ENCODE measurements at regions of chr16 and their contacts with region 1.

Region 1: GRCh38 chr16:86343027-86343787 is 167.1 kb upstream of the FOXF1 start:
- DNase-seq: peak; percentile 83
- H3K4me3 ChIP-seq: no peak overlapping the region
- H3K27ac ChIP-seq: peak overlapping the region; percentile 88
- H3K4me1 ChIP-seq: peaks cover 43% of the 10 kb centered on the region
- H3K27me3 ChIP-seq: no peaks in the 10 kb centered on the region
- CTCF ChIP-seq: no peak
- POLR2A ChIP-seq: no peak

Region 2: GRCh38 chr16:86072328-86073102 is 270.7 kb before region 1 on chr16:
- CTCF ChIA-PET with region 1: interaction called, 3 read pairs
- POLR2A ChIA-PET with region 1: no interaction called
- dilution Hi-C with region 1: no loop called
- intact Hi-C with region 1: loop called (anchors 5 kb)
- DNase-seq: peak; percentile 75
- H3K4me3 ChIP-seq: no peak overlapping the region
- H3K27ac ChIP-seq: no peak overlapping the region
- H3K4me1 ChIP-seq: peaks cover 9% of the 10 kb centered on the region
- H3K27me3 ChIP-seq: peaks cover 0 to 2% of the 10 kb centered on the region in 2 experiments
- CTCF ChIP-seq: peak; percentile 75 to 85
- POLR2A ChIP-seq: no peak

Region 3: DNA sequence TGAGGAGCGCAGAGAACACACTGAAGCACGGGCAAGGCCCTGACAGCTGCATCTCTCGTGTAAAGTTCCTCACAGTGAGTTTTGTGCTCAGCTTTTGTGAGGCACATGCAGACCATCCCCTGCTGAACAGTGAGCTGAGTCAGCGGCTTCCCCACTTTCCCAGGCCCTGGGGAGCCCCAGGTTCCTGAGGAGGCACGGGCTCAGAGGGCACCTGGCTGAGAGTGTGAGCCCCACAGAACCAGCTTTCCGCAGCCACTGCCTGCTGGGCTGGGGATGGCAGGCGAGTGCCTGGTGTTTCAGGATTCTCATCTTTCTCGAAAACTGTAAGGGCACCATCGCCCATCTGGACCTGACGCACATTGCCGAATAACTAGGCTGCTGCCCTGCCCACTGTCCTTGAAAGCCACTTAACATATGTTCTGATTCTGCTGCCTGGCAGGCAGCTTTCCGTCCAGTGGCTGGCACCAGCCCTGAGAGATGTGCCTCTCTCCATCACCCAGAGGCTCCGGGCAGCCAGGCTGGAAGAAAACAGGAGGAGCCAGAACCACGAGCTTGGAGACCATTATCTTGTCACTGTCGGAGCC is 99.5 kb before region 1 on chr16:
- CTCF ChIA-PET with region 1: no interaction called
- POLR2A ChIA-PET with region 1: no interaction called
- dilution Hi-C with region 1: no loop called
- intact Hi-C with region 1: no loop called
- DNase-seq: no peak
- H3K4me3 ChIP-seq: no peak overlapping the region
- H3K27ac ChIP-seq: no peak overlapping the region
- H3K4me1 ChIP-seq: no peaks in the 10 kb centered on the region
- H3K27me3 ChIP-seq: peaks cover 17 to 21% of the 10 kb centered on the region in 2 experiments
- CTCF ChIP-seq: no peak
- POLR2A ChIP-seq: no peak

Region 4: DNA sequence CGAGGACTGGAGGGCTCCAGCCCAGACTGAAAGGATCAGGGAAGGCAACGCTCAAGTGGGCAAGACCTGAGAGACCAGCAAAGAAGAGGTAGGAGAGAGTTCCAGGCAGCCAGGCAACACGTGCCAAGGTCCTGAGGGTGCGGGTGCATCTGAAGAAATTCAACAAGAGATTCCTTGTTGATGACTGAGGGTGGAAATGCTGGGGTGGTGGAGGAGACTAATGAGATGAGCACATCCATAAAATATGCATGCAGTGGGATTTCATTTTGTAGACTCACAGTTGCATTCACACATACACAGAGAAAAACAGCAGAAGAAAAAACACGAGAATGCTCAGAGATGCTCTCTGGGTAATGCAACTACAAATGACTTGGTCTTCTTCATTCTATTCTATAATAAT is 12.3 kb after region 1 on chr16:
- CTCF ChIA-PET with region 1: interaction called, 4 read pairs
- POLR2A ChIA-PET with region 1: no interaction called
- dilution Hi-C with region 1: no loop called
- intact Hi-C with region 1: loop called (anchors 1 kb)
- DNase-seq: no peak
- H3K4me3 ChIP-seq: no peak overlapping the region
- H3K27ac ChIP-seq: no peak overlapping the region
- H3K4me1 ChIP-seq: peaks cover 5% of the 10 kb centered on the region
- H3K27me3 ChIP-seq: peaks cover 20 to 27% of the 10 kb centered on the region in 2 experiments
- CTCF ChIP-seq: no peak
- POLR2A ChIP-seq: no peak

Region 5: GRCh38 chr16:86387461-86388440 is 44.5 kb after region 1 on chr16:
- CTCF ChIA-PET with region 1: interaction called, 8 read pairs
- POLR2A ChIA-PET with region 1: no interaction called
- dilution Hi-C with region 1: no loop called
- intact Hi-C with region 1: loop called (anchors 1 kb)
- DNase-seq: peak; percentile 89
- H3K4me3 ChIP-seq: no peak overlapping the region
- H3K27ac ChIP-seq: peak overlapping the region; percentile 89
- H3K4me1 ChIP-seq: peaks cover 64% of the 10 kb centered on the region
- H3K27me3 ChIP-seq: no peaks in the 10 kb centered on the region
- CTCF ChIP-seq: no peak
- POLR2A ChIP-seq: peak; percentile 38

Region 6: DNA sequence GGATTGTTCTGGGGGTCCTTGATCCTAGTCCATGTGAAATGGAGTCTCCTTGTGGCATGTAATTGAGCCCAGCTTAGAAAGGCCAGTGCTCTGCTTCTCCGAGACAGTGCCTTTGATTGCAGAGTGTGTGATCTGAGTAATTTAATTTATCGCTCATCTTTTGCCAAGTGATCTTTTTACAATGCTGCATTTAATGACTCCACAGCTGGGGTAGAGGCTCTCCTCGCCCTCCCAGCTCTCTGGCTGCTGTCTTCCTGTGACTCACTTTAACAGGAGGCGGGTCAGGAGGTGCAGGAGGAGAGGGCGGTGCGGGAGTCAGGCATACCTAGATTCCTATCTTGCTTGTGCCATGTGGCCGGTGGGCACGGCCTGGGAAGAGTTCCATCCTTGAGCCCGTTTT is 53.7 kb after region 1 on chr16:
- CTCF ChIA-PET with region 1: interaction called, 7 read pairs
- POLR2A ChIA-PET with region 1: no interaction called
- dilution Hi-C with region 1: no loop called
- intact Hi-C with region 1: loop called (anchors 2 kb)
- DNase-seq: peak; percentile 86
- H3K4me3 ChIP-seq: no peak overlapping the region
- H3K27ac ChIP-seq: peak overlapping the region; percentile 84
- H3K4me1 ChIP-seq: peaks cover 46% of the 10 kb centered on the region
- H3K27me3 ChIP-seq: no peaks in the 10 kb centered on the region
- CTCF ChIP-seq: no peak
- POLR2A ChIP-seq: no peak

Region 7: GRCh38 chr16:86414991-86415740 is 72.0 kb after region 1 on chr16:
- CTCF ChIA-PET with region 1: no interaction called
- POLR2A ChIA-PET with region 1: interaction called, 3 read pairs
- dilution Hi-C with region 1: no loop called
- intact Hi-C with region 1: loop called (anchors 1 kb)
- DNase-seq: peak; percentile 85
- H3K4me3 ChIP-seq: peak overlapping the region in 1 of 3 experiments; percentile 23
- H3K27ac ChIP-seq: peak overlapping the region; percentile 71
- H3K4me1 ChIP-seq: peaks cover 11% of the 10 kb centered on the region
- H3K27me3 ChIP-seq: peaks cover 0 to 1% of the 10 kb centered on the region in 2 experiments
- CTCF ChIP-seq: no peak
- POLR2A ChIP-seq: no peak

Region 8: GRCh38 chr16:86508947-86509758 is 165.9 kb after region 1 on chr16:
- CTCF ChIA-PET with region 1: interaction called, 22 read pairs
- POLR2A ChIA-PET with region 1: no interaction called
- dilution Hi-C with region 1: no loop called
- intact Hi-C with region 1: loop called (anchors 2 kb)
- DNase-seq: peak; percentile 70
- H3K4me3 ChIP-seq: peak overlapping the region; percentile 10 to 48 (median 15)
- H3K27ac ChIP-seq: no peak overlapping the region
- H3K4me1 ChIP-seq: no peaks in the 10 kb centered on the region
- H3K27me3 ChIP-seq: peaks cover 48 to 78% of the 10 kb centered on the region in 2 experiments
- CTCF ChIP-seq: no peak
- POLR2A ChIP-seq: no peak